ENCODE measurements at regions of chr5 and their contacts with region 1.

Region 1: GRCh38 chr5:169265888-169266287 is 35.1 kb downstream of the SLIT3 start:
- DNase-seq: no peak
- ATAC-seq: peak; percentile 65; the same call in 1 of the 2 replicates
- H3K4me3 ChIP-seq: no peak overlapping the region
- H3K27ac ChIP-seq: no peak overlapping the region
- H3K4me1 ChIP-seq: no peaks in the 10 kb centered on the region
- H3K27me3 ChIP-seq: peaks cover 17% of the 10 kb centered on the region
- CTCF ChIP-seq: peak; percentile 8 to 59 (median 40); a peak in 5 of 6 replicates
- POLR2A ChIP-seq: no peak
- RAD21 ChIP-seq: peak; percentile 39; the same call in 1 of the 2 replicates

Region 2: DNA sequence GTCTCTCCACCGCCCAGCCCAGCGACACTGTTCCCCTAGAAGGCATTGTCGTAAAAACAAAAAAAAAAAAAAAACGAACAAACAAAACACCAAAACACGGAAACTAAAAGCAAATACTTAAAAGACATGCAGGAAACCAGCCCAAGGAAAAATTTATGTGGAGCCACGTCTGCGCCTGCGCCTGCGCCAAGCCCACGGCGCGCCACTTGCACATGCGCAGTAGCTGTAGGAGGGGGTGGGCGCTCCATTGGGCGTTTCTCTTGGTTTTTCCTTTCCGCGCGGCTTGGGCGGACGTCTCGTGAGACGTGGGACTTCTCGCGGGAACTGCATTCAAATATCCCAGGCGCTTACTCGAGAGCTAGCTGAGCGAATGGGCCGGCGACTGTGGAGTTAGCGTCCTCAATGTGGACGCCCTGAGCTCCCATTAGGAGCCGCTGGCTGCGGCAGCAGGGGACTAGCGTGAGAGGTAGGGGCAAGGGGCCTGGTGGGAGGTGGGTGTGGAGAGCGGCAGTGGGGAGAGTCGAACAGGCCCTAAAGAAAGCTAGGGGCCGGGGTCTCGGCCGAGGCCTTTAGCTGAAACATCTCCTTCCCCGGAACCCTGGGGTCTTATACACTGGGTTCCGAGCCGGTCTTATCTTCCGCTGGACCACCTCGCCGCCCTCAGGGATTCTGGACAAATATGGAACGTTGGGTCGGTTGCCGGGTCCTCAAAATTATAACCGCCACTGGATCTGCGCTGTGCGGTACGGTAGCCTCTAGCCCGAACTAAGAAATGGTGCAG is 317.7 kb after region 1 on chr5 and contains the start of gene SPDL1:
- CTCF ChIA-PET with region 1: no interaction called
- POLR2A ChIA-PET with region 1: no interaction called
- RAD21 ChIA-PET with region 1: no interaction called
- intact Hi-C with region 1: loop called (anchors 1 kb)
- DNase-seq: peak; percentile 93
- ATAC-seq: peak; percentile 95
- H3K4me3 ChIP-seq: peak within 1 kb of the TSS; percentile 84 to 86
- H3K27ac ChIP-seq: peak within 1 kb of the TSS; percentile 35
- H3K4me1 ChIP-seq: peaks cover 0 to 16% of the 10 kb centered on the region in 2 experiments; a peak in 1 of 4 replicates
- H3K27me3 ChIP-seq: peaks cover 10% of the 10 kb centered on the region
- CTCF ChIP-seq: no peak
- POLR2A ChIP-seq: peak; percentile 92
- RAD21 ChIP-seq: no peak
- total RNA-seq, gene SPDL1: 28.5 TPM

Region 3: DNA sequence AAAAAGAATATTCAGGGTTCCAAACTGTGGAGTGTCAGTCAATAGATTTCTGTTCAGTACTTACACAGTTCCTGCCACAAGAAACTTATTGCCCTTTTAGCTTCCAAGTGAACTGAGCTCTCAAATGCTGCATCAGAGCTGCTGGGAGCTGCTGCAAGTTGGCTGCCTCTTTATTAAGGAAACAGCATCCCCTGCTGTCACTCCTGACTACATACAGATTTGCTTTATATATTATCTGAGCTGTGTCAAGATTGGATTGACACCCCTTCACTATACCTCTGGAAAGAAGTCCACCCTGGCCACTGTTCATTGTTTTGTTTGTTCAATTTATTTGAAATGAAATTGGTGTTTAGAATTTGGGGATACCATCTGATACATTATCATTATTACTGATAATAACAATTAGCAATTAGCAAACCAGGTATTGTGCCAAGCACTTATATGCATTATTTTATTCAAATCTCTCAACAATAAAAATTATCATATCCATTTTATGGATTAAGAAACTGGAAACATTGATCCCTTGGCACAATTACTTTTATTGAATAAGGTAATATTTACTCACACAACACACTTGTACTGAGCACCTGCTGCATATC is 950.5 kb after region 1 on chr5:
- CTCF ChIA-PET with region 1: no interaction called
- POLR2A ChIA-PET with region 1: no interaction called
- RAD21 ChIA-PET with region 1: no interaction called
- intact Hi-C with region 1: loop called (anchors 5 kb)
- DNase-seq: peak; percentile 35
- ATAC-seq: peak; percentile 71
- H3K4me3 ChIP-seq: no peak overlapping the region
- H3K27ac ChIP-seq: no peak overlapping the region
- H3K4me1 ChIP-seq: peaks cover 2 to 18% of the 10 kb centered on the region in 2 experiments; a peak in 2 of 4 replicates
- H3K27me3 ChIP-seq: no peaks in the 10 kb centered on the region; the same call in 1 of the 2 replicates
- CTCF ChIP-seq: peak; percentile 44 to 69 (median 66); a peak in 5 of 6 replicates
- POLR2A ChIP-seq: no peak
- RAD21 ChIP-seq: peak; percentile 87

Measured in HCT116 (cell line).